ENCODE measurements at regions of chrX and their contacts with region 1.

Region 1: DNA sequence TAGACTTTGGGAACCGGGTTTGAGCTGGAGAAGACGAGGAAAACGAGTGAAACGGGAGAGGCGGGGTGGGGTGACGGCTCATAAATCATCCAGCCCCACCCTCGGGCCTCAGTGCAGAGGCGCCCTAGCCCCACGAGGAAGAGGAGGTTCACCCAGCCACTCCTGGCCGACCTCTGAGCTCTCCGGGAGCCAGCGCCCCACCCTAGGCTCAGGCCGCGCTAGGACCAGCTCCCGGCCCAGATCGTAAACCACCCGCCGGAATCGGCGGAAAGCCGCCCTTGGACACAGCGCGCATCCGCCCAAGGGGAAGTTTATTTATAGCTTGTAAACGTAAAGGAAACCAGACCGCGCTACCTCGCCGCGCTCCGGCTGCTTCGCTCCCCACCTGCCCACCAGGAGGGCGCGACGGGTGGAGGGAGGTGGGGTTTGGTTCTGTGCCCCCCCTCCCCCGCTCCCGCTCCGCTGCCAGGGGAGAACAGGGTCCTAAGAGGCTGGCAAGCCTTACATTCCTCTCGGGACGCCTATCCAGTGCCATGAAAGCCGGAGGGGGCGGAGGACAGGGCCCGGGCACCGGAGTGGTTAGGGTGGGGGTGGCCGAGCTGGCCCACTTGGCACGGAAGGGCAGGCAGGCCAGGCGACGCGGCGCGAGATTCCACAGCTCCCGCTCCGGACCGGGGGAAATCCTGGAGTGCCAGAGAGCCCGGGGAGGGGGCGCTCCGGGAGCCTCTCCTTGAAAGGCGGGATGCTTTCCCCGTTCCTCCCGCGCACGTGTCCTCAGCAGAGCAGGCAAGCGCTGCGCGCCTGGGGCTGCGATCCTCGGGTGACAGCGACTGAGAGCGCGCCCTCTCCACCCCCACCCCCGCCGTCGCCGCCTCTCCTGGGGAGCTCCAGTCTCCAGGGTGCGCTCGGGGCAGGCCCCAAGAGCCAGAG is 84.2 kb downstream of the BCOR start:
- DNase-seq: peak; percentile 77
- H3K4me3 ChIP-seq: peak overlapping the region; percentile 73
- H3K27ac ChIP-seq: peak overlapping the region; percentile 0
- H3K4me1 ChIP-seq: peaks cover 27% of the 10 kb centered on the region
- CTCF ChIP-seq: no peak

Region 2: GRCh38 chrX:38891641-38892413 is 1121.7 kb before region 1 on chrX:
- CTCF ChIA-PET with region 1: no interaction called
- POLR2A ChIA-PET with region 1: no interaction called
- intact Hi-C with region 1: no loop called
- DNase-seq: peak; percentile 69
- H3K4me3 ChIP-seq: no peak overlapping the region
- H3K27ac ChIP-seq: peak overlapping the region; percentile 22
- H3K4me1 ChIP-seq: peaks cover 13% of the 10 kb centered on the region
- CTCF ChIP-seq: no peak

Region 3: DNA sequence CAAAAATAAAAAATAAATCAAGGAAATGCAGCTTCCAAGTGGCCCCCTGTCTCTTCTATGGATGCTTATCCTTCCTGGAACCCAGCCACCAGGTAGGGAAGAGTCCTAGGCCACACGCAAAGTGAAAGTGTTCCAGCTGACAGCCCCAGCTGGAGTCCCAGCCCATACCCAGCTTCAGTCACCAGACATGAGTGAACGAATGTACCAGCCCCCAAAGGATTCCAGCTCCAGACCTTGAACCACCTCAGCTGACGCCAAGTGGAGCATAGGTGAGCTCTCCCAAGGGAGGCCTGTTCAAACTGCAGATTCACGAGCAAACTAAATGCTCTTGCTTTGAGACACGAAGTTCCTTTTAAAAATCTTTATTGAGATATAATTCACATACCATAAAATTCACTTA is 22.2 kb after region 1 on chrX:
- CTCF ChIA-PET with region 1: no interaction called
- POLR2A ChIA-PET with region 1: no interaction called
- intact Hi-C with region 1: no loop called
- DNase-seq: no peak
- H3K4me3 ChIP-seq: no peak overlapping the region
- H3K27ac ChIP-seq: no peak overlapping the region
- H3K4me1 ChIP-seq: peaks cover 19% of the 10 kb centered on the region
- CTCF ChIP-seq: no peak

Region 4: DNA sequence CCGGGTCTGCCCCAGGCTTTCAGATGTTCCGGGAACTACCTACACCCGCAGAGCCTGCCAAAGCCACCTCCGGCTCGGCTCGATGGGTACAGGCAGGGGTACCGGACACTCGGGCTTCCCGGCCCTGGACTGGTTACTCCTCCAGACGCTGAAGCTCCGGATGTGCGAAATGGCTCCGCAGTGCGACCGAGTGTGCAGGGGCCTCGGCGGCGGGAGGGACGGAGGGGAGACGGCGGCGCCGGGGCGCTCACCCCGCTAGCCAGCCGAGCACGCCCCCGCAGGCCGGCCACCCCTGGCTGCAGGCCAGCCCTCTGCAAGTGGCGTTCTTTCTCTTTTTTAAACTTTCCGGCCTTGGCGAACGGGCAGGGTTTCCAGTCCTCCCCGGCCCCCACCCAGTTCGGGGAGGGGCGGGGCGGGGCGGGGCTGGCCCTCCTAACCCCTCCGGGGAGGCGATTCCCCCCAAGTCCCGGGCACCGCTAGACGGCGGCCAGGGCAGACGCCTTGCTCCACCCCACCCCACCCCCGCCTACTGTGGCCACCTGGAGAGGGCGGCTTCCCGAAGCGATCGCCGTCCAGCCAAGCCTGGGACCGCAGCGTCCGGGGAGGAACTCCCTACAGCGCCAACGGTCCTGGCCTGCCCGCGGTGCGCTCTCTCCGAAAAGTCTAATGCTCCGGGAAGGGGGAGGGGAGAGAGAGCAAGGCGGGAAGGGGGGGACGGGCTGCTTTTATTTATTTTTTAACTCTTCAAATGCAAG is 76.7 kb after region 1 on chrX:
- CTCF ChIA-PET with region 1: no interaction called
- POLR2A ChIA-PET with region 1: no interaction called
- intact Hi-C with region 1: loop called (anchors 2 kb)
- DNase-seq: peak; percentile 27
- H3K4me3 ChIP-seq: peak overlapping the region; percentile 63
- H3K27ac ChIP-seq: no peak overlapping the region
- H3K4me1 ChIP-seq: peaks cover 86% of the 10 kb centered on the region
- CTCF ChIP-seq: no peak